ENCODE measurements at regions of chr7 and their contacts with region 1.

Region 1: DNA sequence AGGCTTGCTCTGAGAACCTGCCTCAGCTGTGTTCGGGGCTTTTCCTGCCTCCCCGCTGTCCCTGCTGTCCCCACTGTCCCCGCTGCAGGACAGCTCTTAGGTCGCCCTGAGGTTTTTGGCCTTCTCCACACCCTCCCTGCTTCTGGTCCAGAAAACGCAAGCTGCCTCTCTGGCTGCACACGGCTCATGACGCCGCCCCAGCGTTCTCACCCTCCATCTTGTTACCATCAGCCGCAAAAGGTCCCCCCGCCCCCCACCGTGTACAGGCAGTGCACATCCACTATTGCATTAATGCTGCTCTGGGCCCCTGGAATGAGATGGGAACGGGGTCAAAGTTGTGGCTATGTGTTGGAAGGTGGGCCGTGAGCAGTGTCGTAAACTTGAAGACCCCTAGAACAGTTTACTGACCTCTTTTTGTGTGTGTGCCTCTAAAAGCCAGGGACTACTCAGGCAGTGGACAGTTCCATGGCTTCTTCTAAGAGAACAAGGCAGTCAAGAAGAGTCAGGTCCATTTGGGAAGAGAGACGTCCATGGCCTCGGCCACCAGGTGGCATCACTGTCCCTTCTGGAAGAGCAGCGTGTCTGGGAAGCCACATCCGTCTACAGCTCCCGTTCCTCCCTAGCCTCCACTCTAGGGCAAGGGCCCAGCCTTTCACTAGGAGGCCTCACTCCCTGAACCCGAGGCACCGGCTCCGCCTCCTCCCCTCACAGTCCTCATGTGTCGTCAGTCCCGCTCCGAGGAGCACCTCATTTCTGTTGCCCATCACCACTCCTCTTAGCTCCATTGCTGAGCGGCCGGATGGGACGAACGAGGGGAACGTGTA is 38.5 kb upstream of the MKRN1 start:
- ATAC-seq: peak; percentile 91 to 100 (median 99)
- H3K4me3 ChIP-seq: no peak overlapping the region
- H3K27ac ChIP-seq: no peak overlapping the region
- H3K4me1 ChIP-seq: peaks cover 0 to 3% of the 10 kb centered on the region in 2 donors

Region 2: GRCh38 chr7:140646931-140647647 is 129.3 kb after region 1 on chr7:
- in situ Hi-C with region 1: loop called (anchors 10 to 25 kb)
- ATAC-seq: peak; percentile 67 to 97 (median 95)
- H3K4me3 ChIP-seq: no peak overlapping the region
- H3K27ac ChIP-seq: no peak overlapping the region
- H3K4me1 ChIP-seq: peaks cover 5 to 21% of the 10 kb centered on the region in 2 donors

Region 3: GRCh38 chr7:140653319-140654108 is 135.8 kb after region 1 on chr7:
- in situ Hi-C with region 1: loop called (anchors 10 to 25 kb)
- ATAC-seq: peak; percentile 49 to 100 (median 99)
- H3K4me3 ChIP-seq: no peak overlapping the region
- H3K27ac ChIP-seq: peak overlapping the region in 1 of 2 donors; percentile 15
- H3K4me1 ChIP-seq: peaks cover 0 to 3% of the 10 kb centered on the region in 2 donors

Region 4: GRCh38 chr7:140673063-140673773 is 155.5 kb after region 1 on chr7:
- in situ Hi-C with region 1: loop called in 3 of 9 experiments (anchors 25 kb)
- ATAC-seq: peak; percentile 66 to 80 (median 77)
- H3K4me3 ChIP-seq: peak overlapping the region; percentile 57 to 88 (median 60)
- H3K27ac ChIP-seq: peak overlapping the region in 1 of 2 donors; percentile 49
- H3K4me1 ChIP-seq: peaks cover 25 to 26% of the 10 kb centered on the region in 2 donors

Measured in motor neuron (in vitro differentiated cells).